Panc1 (cell line): ENCODE measurements at regions of chr1 and their contacts with region 1.

Region 1: DNA sequence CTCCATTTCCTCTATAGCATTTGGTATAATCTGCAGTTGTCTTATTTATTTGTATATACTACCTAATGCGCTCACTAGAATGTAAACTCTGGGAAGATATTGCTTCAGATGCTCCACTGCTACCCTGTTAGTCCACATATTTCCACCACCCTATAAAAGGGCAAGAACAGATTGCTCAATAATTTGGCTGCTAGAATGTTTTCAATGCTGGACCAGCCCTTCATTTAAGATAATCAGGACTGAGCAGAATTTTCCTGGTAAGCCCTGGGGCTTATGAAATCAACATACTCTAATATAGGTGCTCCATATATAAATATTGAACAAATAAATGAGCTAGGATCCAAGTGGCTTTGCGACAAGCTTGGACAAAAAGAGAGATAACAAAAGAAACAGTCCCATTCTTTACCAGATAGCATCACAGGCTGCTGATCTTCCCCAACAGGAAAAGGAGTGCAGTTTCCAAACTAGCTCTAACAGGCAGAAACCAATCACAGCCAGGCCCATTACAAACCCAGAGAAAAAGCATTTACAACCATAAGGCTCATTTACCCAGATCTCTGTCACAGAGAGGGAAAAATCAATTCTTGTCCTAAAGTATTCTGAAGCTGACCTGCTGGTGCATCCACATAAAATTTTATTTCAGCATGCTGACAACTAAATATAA is 8.3 kb downstream of the BCAR3 start:
- DNase-seq: no peak
- ATAC-seq: no peak
- H3K4me3 ChIP-seq: no peak overlapping the region
- H3K27ac ChIP-seq: peak overlapping the region; percentile 46
- H3K4me1 ChIP-seq: peaks cover 69% of the 10 kb centered on the region
- H3K27me3 ChIP-seq: no peaks in the 10 kb centered on the region
- CTCF ChIP-seq: no peak

Region 2: DNA sequence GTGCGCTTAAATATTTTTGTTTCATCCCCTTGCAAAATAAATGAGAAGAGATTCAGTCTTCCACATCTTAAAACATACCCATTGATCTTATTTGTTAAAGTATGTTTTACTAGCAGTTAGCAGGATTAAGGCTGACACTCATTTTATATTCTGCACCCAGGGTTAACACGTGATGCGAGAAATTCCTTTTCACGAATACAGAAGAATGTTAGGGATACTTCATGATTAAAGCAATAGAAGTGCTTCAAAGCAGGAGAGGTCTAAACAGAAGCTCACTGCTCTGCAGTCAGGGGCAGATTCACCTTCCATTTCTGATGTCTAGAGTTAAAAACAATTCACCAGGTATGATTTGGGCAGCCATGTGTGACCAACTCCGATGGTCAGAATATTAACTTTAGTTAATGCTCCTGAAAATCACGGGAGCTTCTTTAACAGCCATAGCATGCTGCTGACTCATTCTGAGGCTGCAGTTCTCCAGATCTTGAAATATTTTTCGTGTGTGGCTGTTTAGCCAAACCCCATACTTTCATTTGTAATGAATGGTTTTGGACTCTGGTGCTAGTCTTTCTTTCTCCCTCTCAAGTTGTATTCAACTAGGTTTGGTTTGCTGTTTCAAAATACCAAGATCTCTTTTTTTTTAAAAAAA is 11.3 kb before region 1 on chr1:
- CTCF ChIA-PET with region 1: interaction called, 16 read pairs
- POLR2A ChIA-PET with region 1: no interaction called
- in situ Hi-C with region 1: no loop called
- intact Hi-C with region 1: no loop called
- DNase-seq: no peak
- ATAC-seq: peak; percentile 32; the same call in 1 of the 2 replicates
- H3K4me3 ChIP-seq: no peak overlapping the region
- H3K27ac ChIP-seq: peak overlapping the region; percentile 79
- H3K4me1 ChIP-seq: peaks cover 49% of the 10 kb centered on the region
- H3K27me3 ChIP-seq: no peaks in the 10 kb centered on the region
- CTCF ChIP-seq: no peak